Panc1 (cell line): ENCODE measurements at regions of chr1 and their contacts with region 1.

Region 1: DNA sequence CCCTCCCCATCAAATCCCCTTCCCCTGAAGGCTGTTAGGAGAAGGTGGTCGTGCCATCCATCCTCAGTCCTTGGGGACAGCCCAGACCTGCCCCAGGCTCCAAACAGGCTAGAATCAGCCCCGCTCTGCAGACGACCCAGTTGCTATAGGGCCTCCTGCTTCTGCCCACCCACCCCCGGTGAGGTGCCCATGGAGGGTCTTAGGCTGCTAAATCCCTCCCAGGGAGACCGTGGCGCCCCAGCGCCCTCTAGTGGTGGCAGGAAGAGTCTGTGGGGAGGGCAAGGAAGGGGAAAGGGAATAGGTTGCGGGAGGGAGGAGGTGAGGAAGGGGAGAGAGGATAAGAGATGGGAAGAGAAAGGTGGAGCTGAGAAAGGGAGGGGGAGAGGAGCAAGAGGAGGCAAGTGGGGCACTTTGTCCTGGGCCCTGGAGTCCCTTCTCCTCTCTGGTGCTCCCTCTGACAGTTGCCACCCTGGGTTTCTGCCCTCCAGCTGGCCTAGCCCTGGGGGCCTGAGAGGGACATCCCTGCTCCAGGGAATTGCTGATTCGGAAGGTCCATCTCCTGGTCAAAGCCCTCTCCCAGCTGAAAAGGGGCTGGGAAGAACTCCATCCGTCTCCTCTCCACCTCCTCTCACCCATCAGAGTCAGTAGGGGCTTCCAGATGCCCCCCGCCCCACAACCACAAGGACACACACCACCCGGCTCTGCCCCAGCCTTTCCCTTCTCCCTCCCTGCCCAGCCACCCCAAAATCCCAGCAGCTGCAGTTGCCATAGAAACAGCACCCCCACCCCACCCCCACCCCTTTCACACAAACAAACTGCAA is 55.4 kb downstream of the CAMK2N1 start:
- DNase-seq: no peak
- ATAC-seq: peak; percentile 74
- H3K4me3 ChIP-seq: no peak overlapping the region
- H3K27ac ChIP-seq: no peak overlapping the region
- H3K4me1 ChIP-seq: peaks cover 4% of the 10 kb centered on the region
- H3K27me3 ChIP-seq: no peaks in the 10 kb centered on the region
- CTCF ChIP-seq: peak; percentile 93

Region 2: GRCh38 chr1:20058531-20058930 is 372.0 kb before region 1 on chr1:
- CTCF ChIA-PET with region 1: no interaction called
- POLR2A ChIA-PET with region 1: no interaction called
- in situ Hi-C with region 1: no loop called
- intact Hi-C with region 1: no loop called
- DNase-seq: no peak
- ATAC-seq: no peak
- H3K4me3 ChIP-seq: no peak overlapping the region
- H3K27ac ChIP-seq: no peak overlapping the region
- H3K4me1 ChIP-seq: no peaks in the 10 kb centered on the region
- H3K27me3 ChIP-seq: peaks cover 4% of the 10 kb centered on the region; the same call in 1 of the 2 replicates
- CTCF ChIP-seq: no peak

Region 3: GRCh38 chr1:20165522-20165951 is 265.0 kb before region 1 on chr1:
- CTCF ChIA-PET with region 1: no interaction called
- POLR2A ChIA-PET with region 1: interaction called, 11 read pairs
- in situ Hi-C with region 1: no loop called
- intact Hi-C with region 1: no loop called
- DNase-seq: no peak
- ATAC-seq: 0 out of 2 replicates have a peak, but pooled peaks have one; percentile 76
- H3K4me3 ChIP-seq: no peak overlapping the region
- H3K27ac ChIP-seq: no peak overlapping the region
- H3K4me1 ChIP-seq: no peaks in the 10 kb centered on the region; the same call in 1 of the 2 replicates
- H3K27me3 ChIP-seq: no peaks in the 10 kb centered on the region
- CTCF ChIP-seq: no peak; the same call in 1 of the 2 replicates

Region 4: GRCh38 chr1:20493839-20494608 is 63.5 kb after region 1 on chr1:
- CTCF ChIA-PET with region 1: interaction called, 11 read pairs
- POLR2A ChIA-PET with region 1: no interaction called
- in situ Hi-C with region 1: no loop called
- intact Hi-C with region 1: no loop called
- DNase-seq: peak; percentile 90
- ATAC-seq: peak; percentile 72
- H3K4me3 ChIP-seq: no peak overlapping the region
- H3K27ac ChIP-seq: no peak overlapping the region
- H3K4me1 ChIP-seq: no peaks in the 10 kb centered on the region
- H3K27me3 ChIP-seq: no peaks in the 10 kb centered on the region
- CTCF ChIP-seq: peak; percentile 94